ENCODE measurements at regions of chr11 and their contacts with region 1.

Region 1: DNA sequence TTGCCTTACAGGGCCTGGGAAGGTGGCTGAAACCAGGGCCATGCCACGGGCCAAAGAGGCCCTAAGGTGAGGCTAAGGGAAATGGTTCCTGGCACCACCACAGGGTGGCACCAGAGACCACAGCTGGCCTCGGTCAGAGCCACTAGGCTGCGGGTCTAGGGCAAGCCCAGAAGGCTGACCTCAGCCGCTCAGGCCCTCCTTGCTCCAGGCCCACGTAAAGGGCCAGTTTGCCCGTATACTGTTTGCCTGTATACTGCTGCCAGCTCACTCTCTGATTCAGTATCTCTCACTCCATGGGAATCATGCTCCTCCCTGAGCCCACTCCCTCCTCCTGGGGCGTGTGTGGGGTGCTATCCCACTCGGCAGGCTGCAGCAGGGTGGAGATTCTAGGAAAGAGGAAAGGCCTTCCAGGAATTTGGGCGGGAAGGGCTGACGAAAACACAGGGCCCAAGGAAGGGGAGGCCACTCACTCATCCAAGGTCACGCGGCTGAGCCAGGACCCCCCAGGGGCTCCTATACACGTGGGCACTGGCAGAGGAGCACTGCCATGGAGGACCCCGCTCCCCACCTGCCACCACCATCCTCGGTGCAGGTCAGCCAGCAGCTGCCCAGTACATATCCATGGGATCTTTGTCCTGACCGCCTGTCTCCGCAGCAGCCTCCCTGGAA is 62.4 kb downstream of the NECTIN1 start:
- DNase-seq: peak in 4 of 5 donors; percentile 68 to 88 (median 77)
- H3K4me3 ChIP-seq: no peak overlapping the region
- H3K27ac ChIP-seq: no peak overlapping the region
- H3K4me1 ChIP-seq: peaks cover 0 to 2% (median 0%) of the 10 kb centered on the region in 3 donors
- H3K27me3 ChIP-seq: no peaks in the 10 kb centered on the region
- CTCF ChIP-seq: peak; percentile 95

Region 2: GRCh38 chr11:120079750-120080490 is 413.3 kb after region 1 on chr11:
- intact Hi-C with region 1: loop called (anchors 10 kb)
- DNase-seq: no peak
- H3K4me3 ChIP-seq: no peak overlapping the region
- H3K27ac ChIP-seq: no peak overlapping the region
- H3K4me1 ChIP-seq: no peaks in the 10 kb centered on the region
- H3K27me3 ChIP-seq: no peaks in the 10 kb centered on the region
- CTCF ChIP-seq: peak; percentile 36

Region 3: GRCh38 chr11:120112174-120112796 is 445.7 kb after region 1 on chr11:
- intact Hi-C with region 1: loop called (anchors 10 kb)
- DNase-seq: no peak
- H3K4me3 ChIP-seq: no peak overlapping the region
- H3K27ac ChIP-seq: no peak overlapping the region
- H3K4me1 ChIP-seq: no peaks in the 10 kb centered on the region
- H3K27me3 ChIP-seq: no peaks in the 10 kb centered on the region
- CTCF ChIP-seq: no peak